ENCODE measurements at regions of chr1 and their contacts with region 1.

Region 1: DNA sequence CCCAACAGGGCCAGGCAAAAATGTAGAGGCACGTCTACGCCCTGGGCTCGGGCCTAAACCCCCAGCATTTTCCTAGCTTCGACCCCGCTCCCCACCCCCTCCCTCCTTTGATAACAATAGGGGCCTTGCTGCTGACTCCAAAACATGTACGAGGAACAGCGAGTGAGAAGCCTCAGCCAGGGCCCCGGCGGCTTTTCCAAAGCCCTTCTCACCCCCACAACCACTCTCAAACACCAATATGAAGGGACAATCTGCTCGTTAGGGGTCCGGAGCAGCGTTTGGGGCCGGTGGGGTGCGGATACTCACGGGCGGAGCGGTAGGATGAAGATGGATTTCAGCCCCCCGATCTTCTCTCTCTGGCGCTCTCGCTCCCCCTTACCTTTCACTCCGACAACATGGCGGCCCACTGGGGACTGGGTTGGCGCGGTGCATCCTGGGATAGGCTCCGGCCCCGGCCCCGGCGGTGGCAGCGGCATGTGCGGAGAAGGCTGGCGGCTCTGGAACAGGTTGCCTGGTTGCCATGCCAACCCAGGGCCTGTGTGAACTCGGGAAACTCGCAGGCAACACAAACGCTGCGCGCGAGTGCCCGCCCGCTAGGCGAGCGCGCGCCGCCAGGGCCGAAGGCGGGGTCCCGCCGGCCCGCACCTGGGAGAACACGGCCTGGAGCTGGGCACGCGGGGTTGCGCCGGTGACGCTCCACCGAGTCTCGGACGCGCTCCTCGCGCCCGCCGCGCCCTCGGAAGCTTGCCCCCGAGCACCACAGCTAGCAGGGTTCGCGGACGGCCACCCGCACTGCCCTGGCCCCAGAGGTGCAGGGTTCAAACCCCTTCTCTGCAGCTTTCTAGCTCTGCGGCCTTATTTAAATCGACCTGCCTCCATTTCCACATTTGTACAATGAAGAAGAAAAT is at the start of gene PUM1:
- DNase-seq: peak; percentile 98
- H3K4me3 ChIP-seq: peak within 1 kb of the TSS; percentile 55 to 68 (median 62)
- H3K27ac ChIP-seq: peak within 1 kb of the TSS; percentile 89 to 95 (median 92)
- H3K4me1 ChIP-seq: peaks cover 0 to 39% (median 32%) of the 10 kb centered on the region in 4 donors
- H3K27me3 ChIP-seq: no peaks in the 10 kb centered on the region
- CTCF ChIP-seq: peak in 1 of 4 experiments; percentile 11
- EP300 ChIP-seq: peak in 1 of 4 donors; percentile 31
- POLR2A ChIP-seq: peak in 1 of 2 donors; percentile 55
- total RNA-seq, gene PUM1: 66.4 to 89.5 (median 70.4) TPM

Region 2: GRCh38 chr1:30966690-30967369 is 98.7 kb before region 1 on chr1:
- intact Hi-C with region 1: loop called (anchors 10 kb)
- DNase-seq: no peak
- H3K4me3 ChIP-seq: no peak overlapping the region
- H3K27ac ChIP-seq: peak overlapping the region in 3 of 4 donors; percentile 41 to 49 (median 49)
- H3K4me1 ChIP-seq: peaks cover 0 to 29% (median 21%) of the 10 kb centered on the region in 4 donors
- H3K27me3 ChIP-seq: no peaks in the 10 kb centered on the region
- CTCF ChIP-seq: no peak
- EP300 ChIP-seq: no peak
- POLR2A ChIP-seq: no peak

Region 3: DNA sequence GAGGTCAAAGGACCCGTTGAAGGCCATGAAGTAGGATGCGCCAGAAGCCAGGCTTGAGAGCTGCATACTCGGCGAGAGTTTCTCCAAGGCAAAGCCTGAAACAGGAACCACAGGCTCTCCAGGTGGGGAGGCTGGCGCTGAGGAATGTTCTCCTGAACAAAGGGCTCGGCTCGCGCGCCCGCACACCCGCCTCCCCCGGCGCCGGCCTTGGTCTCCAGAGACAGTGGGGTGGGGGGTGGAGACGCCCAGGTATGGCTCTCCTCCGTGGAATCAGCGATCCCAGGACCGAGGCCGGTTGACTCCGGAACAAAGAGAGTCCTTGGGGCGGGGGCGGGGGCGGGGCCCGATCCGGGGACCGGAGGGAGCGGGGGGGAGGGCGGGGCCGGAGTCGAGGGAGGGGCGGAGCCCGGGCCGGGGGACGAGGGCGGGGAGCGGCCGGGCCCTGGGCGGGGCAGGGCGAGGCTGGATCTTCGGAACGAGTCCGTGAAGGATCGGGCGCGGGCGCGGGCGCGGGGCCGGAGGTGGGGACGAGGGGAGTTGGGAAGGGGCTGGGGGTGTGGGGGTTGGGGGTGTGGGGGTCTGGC is 89.2 kb after region 1 on chr1:
- intact Hi-C with region 1: loop called (anchors 1 kb)
- DNase-seq: peak; percentile 81
- H3K4me3 ChIP-seq: peak overlapping the region; percentile 75 to 92 (median 78)
- H3K27ac ChIP-seq: peak overlapping the region; percentile 79 to 84 (median 84)
- H3K4me1 ChIP-seq: peaks cover 0 to 12% (median 5%) of the 10 kb centered on the region in 4 donors
- H3K27me3 ChIP-seq: no peaks in the 10 kb centered on the region
- CTCF ChIP-seq: no peak
- EP300 ChIP-seq: no peak
- POLR2A ChIP-seq: no peak

Region 4: GRCh38 chr1:31296486-31297276 is 231.1 kb after region 1 on chr1 and contains the starts of genes SNRNP40 and ZCCHC17:
- intact Hi-C with region 1: loop called (anchors 10 kb)
- DNase-seq: peak; percentile 98
- H3K4me3 ChIP-seq: peak within 1 kb of the TSS; percentile 76 to 91 (median 83)
- H3K27ac ChIP-seq: peak within 1 kb of the TSS; percentile 90 to 94 (median 92)
- H3K4me1 ChIP-seq: peaks cover 0 to 47% (median 30%) of the 10 kb centered on the region in 4 donors
- H3K27me3 ChIP-seq: no peaks in the 10 kb centered on the region
- CTCF ChIP-seq: no peak
- EP300 ChIP-seq: no peak
- POLR2A ChIP-seq: peak; percentile 62 to 70
- total RNA-seq, gene SNRNP40: 19.4 to 36.4 (median 30.3) TPM
- total RNA-seq, gene ZCCHC17: 23.3 to 33.2 (median 25.7) TPM

Measured in sigmoid colon (tissue), 7 donors.